AG04450 (cell line): ENCODE measurements at regions of chr20 and their contacts with region 1.

Region 1: DNA sequence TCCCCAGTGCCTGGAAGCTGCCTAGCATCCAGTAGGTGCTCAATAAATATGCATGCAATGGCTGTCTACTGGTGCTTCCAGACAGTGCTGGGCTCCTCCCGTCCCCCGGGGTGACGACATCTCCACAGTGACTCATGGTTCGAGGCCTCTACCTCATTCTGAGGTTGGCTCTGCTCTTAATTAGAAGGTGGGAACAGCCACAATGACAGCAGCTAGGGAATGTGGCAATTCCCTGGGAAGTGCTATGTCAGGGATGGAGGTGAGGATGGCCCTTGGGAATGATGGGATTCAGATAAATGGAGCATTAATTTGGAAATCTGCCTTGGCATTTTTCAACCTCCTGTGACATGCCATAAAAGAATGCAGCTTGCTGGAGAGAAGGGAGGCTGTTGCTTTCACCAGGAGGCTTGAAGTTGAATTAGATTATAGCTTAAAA is 43.5 kb upstream of the NFATC2 start:
- DNase-seq: no peak
- H3K4me3 ChIP-seq: no peak overlapping the region
- H3K27ac ChIP-seq: peak overlapping the region; percentile 11
- H3K27me3 ChIP-seq: no peaks in the 10 kb centered on the region
- CTCF ChIP-seq: no peak

Region 2: DNA sequence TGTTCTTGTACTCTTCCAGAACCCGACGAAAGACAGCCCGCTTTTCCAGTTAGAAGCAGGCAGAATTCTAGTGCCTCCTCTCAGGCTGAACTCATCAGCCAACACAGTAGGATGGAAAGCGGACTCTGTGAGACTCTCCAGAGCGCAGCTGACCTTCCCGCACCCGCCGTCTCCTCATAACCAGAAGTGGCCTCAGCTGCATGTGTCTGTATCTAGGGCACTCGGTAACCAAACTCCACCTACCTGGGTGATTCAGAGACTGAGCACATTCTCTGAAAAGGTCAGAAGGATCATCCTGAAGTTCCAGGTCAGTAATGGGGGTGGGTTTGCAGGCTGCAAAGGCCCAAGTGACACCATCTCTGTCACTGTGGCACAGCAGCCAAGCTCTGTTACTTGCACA is 23.2 kb after region 1 on chr20:
- CTCF ChIA-PET with region 1: no interaction called
- POLR2A ChIA-PET with region 1: interaction called, 13 read pairs
- DNase-seq: no peak
- H3K4me3 ChIP-seq: no peak overlapping the region
- H3K27ac ChIP-seq: no peak overlapping the region
- H3K27me3 ChIP-seq: no peaks in the 10 kb centered on the region
- CTCF ChIP-seq: no peak